ENCODE measurements at regions of chr1 and their contacts with region 1.

Region 1: GRCh38 chr1:35715568-35716002 is 3.1 kb downstream of the C1orf216 start:
- DNase-seq: peak; percentile 68
- H3K4me3 Mint-ChIP-seq: peak overlapping the region; percentile 57
- H3K27ac Mint-ChIP-seq: no peak overlapping the region
- H3K4me1 Mint-ChIP-seq: peaks cover 29% of the 10 kb centered on the region
- H3K27me3 Mint-ChIP-seq: no peaks in the 10 kb centered on the region

Region 2: DNA sequence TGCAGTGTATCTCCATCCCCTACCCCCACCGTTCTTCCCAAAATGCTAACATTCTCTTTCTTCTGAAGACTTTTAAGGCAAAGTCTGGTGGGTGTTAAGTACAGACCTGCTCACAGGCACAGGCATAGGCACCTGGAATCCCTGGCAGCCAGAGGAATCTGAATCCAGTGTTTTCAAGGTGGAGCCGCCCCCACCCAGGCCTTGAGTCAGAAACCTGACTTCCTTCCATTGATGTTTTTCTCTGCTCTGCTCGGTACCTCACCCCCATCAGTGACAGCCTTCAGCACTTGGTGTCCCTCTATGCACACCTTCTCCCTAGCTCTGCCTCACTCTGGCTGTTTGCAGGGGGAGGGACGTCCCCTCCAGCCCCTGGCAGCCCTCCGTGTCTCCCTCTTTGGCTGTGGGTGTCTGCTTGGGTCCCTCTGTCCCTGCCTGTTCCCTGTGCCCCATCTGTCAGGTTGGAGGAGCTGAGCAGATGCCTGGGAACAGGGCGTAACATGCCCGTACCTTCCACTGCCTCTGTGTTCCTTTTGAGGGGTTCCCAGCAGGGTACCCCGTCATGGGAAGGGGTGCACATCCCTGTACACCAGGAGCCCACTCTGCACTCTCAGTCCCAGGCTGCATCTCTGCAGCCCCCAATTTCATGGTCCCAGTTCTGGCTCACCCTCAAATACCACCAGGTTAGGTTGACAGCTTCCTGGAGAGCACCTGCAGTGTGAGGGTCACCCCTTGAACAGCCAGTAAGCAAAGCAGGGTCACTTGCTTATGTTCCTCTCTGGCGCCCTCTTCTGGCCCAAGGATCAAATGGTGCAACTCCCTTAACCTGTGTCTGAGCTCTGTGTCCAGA is 151.3 kb before region 1 on chr1:
- intact Hi-C with region 1: loop called (anchors 1 kb)
- DNase-seq: peak; percentile 71
- H3K4me3 Mint-ChIP-seq: no peak overlapping the region
- H3K27ac Mint-ChIP-seq: no peak overlapping the region
- H3K4me1 Mint-ChIP-seq: peaks cover 21% of the 10 kb centered on the region
- H3K27me3 Mint-ChIP-seq: no peaks in the 10 kb centered on the region

Region 3: GRCh38 chr1:35641233-35641866 is 74.2 kb before region 1 on chr1 and contains the start of gene PSMB2:
- intact Hi-C with region 1: loop called (anchors 2 kb)
- DNase-seq: peak; percentile 93
- H3K4me3 Mint-ChIP-seq: peak within 1 kb of the TSS; percentile 99
- H3K27ac Mint-ChIP-seq: peak within 1 kb of the TSS; percentile 98
- H3K4me1 Mint-ChIP-seq: peaks cover 31% of the 10 kb centered on the region
- H3K27me3 Mint-ChIP-seq: peaks cover 24% of the 10 kb centered on the region
- total RNA-seq, gene PSMB2: 123 and 124 TPM in 2 replicates

Region 4: DNA sequence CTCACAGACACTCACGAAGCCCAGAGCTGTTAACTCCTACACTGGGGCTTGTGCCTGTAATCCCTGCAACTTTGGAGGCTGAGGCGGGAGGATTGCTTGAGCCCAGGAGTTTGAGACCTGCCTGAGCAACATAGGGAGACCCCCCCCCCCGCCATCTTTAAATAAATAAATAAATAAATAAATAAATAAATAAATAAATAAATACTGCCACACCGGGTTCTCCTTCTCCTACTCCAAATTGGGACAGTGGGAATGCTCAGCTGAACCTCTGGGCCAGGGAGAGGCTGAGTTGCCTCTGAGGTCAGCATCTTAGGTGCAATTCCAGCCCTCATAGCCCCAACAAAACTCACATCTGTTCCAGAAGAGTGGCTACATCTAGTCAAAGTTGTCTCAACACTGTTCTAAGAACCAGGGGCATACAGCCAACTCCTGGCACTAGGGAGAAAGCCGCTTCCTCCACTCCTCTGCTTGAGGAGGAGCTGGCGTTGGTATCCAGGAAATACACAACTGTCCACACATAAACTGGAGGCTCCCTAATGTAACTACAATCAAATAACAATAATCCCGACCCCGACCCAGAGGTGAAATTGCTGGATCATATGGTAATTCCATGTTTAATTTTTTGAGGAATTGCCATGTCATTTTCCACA is 23.9 kb before region 1 on chr1:
- intact Hi-C with region 1: no loop called
- DNase-seq: no peak
- H3K4me3 Mint-ChIP-seq: no peak overlapping the region
- H3K27ac Mint-ChIP-seq: no peak overlapping the region
- H3K4me1 Mint-ChIP-seq: no peaks in the 10 kb centered on the region
- H3K27me3 Mint-ChIP-seq: peaks cover 27% of the 10 kb centered on the region